ENCODE measurements at regions of chr17 and their contacts with region 1.

Region 1: GRCh38 chr17:409848-410545 is 57.4 kb upstream of the RPH3AL start:
- DNase-seq: peak; percentile 100
- H3K4me3 ChIP-seq: peak overlapping the region; percentile 64 to 98 (median 85)
- H3K27ac ChIP-seq: peak overlapping the region; percentile 70 to 87 (median 76)
- H3K4me1 ChIP-seq: peaks cover 0 to 25% (median 20%) of the 10 kb centered on the region in 4 donors
- H3K27me3 ChIP-seq: no peaks in the 10 kb centered on the region
- CTCF ChIP-seq: no peak
- EP300 ChIP-seq: no peak
- POLR2A ChIP-seq: no peak

Region 2: DNA sequence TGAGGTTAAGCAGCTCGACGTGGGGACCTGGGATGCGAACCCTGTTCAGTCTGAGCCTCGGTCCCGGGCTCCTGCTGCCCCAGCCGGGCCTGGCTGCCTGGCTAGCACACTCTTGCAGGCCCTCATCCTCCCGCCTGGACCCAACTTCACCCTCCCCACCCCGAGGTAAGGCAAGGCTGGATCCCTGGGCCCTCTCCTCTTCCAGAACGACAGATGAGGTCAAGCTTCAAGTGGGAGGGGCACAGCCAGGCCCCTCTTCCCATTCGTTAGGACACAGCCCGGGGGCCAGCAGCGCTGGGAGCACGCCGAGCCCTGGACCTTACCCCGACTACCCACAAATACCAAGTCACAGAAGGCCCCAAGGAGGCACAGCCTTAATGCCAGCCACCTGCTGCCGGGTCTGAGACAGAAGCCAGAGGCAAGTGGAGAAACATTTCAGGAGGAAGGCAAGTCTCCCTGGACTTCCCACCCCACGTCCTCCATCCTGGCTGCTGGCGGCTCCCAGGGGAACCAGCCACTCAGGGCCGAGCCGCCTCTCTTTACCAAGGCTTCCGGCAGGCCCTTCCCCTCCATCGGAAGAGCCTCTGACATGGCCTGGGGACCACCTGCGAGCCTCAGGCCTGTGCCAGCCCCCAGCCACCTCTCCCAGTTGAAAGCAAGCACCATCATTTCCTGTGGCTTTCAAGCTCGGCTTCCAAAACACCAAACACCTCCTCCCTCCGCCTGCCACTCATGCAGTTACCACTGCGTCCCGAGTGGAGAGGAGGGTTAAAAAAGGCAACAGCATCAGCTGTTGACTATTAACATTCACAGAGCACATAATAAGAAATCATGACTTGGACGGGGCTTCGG is 117.2 kb before region 1 on chr17:
- intact Hi-C with region 1: no loop called
- DNase-seq: peak; percentile 38
- H3K4me3 ChIP-seq: no peak overlapping the region
- H3K27ac ChIP-seq: no peak overlapping the region
- H3K4me1 ChIP-seq: peaks cover 0 to 3% (median 0%) of the 10 kb centered on the region in 4 donors
- H3K27me3 ChIP-seq: peaks cover 0 to 5% (median 0%) of the 10 kb centered on the region in 3 donors
- CTCF ChIP-seq: no peak
- EP300 ChIP-seq: no peak
- POLR2A ChIP-seq: no peak

Region 3: GRCh38 chr17:427327-427726 is 17.3 kb after region 1 on chr17:
- intact Hi-C with region 1: no loop called
- DNase-seq: no peak
- H3K4me3 ChIP-seq: no peak overlapping the region
- H3K27ac ChIP-seq: no peak overlapping the region
- H3K4me1 ChIP-seq: no peaks in the 10 kb centered on the region
- H3K27me3 ChIP-seq: no peaks in the 10 kb centered on the region
- CTCF ChIP-seq: no peak
- EP300 ChIP-seq: no peak
- POLR2A ChIP-seq: no peak

Region 4: DNA sequence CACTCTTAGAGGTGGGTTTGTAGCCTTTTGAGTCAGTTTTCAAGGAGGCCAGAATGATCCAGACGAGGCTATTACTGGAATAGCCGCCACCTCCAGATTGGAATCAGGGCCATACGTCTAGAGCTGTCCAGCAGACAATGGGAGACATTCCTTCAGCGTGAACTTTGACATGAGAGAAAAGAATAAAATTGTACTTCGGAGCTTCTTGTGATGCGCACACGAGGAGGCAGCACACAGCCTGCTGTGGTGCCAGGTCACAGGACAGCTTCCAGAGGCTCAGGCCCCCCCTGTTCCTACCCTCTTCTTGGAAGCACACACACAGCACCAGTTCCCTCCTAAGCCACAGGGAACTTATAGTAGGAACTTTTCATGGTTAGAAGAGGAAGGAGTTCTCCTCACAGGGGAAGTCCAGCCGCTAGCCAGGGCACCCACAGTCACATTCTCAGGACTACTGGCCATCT is 223.7 kb after region 1 on chr17:
- intact Hi-C with region 1: loop called (anchors 2 kb)
- DNase-seq: peak; percentile 80
- H3K4me3 ChIP-seq: no peak overlapping the region
- H3K27ac ChIP-seq: peak overlapping the region; percentile 66 to 82 (median 72)
- H3K4me1 ChIP-seq: peaks cover 0 to 30% (median 27%) of the 10 kb centered on the region in 4 donors
- H3K27me3 ChIP-seq: no peaks in the 10 kb centered on the region
- CTCF ChIP-seq: peak in 1 of 4 experiments; percentile 30
- EP300 ChIP-seq: no peak
- POLR2A ChIP-seq: no peak

Region 5: GRCh38 chr17:700504-701094 is 290.6 kb after region 1 on chr17:
- intact Hi-C with region 1: loop called (anchors 1 kb)
- DNase-seq: no peak
- H3K4me3 ChIP-seq: no peak overlapping the region
- H3K27ac ChIP-seq: peak overlapping the region in 1 of 4 donors; percentile 35
- H3K4me1 ChIP-seq: peaks cover 0 to 6% (median 0%) of the 10 kb centered on the region in 4 donors
- H3K27me3 ChIP-seq: no peaks in the 10 kb centered on the region
- CTCF ChIP-seq: peak; percentile 30 to 76 (median 68)
- EP300 ChIP-seq: no peak
- POLR2A ChIP-seq: no peak

Region 6: GRCh38 chr17:979538-980405 is 569.8 kb after region 1 on chr17 and contains the start of gene NXN:
- intact Hi-C with region 1: loop called (anchors 5 kb)
- DNase-seq: peak; percentile 94
- H3K4me3 ChIP-seq: peak within 1 kb of the TSS; percentile 69 to 92 (median 72)
- H3K27ac ChIP-seq: peak within 1 kb of the TSS; percentile 88 to 93 (median 90)
- H3K4me1 ChIP-seq: peaks cover 0 to 47% (median 40%) of the 10 kb centered on the region in 4 donors
- H3K27me3 ChIP-seq: no peaks in the 10 kb centered on the region
- CTCF ChIP-seq: peak in 1 of 4 experiments; percentile 13
- EP300 ChIP-seq: no peak
- POLR2A ChIP-seq: peak; percentile 11 to 50
- total RNA-seq, gene NXN: 50.4 to 75.9 (median 67.1) TPM

Region 7: DNA sequence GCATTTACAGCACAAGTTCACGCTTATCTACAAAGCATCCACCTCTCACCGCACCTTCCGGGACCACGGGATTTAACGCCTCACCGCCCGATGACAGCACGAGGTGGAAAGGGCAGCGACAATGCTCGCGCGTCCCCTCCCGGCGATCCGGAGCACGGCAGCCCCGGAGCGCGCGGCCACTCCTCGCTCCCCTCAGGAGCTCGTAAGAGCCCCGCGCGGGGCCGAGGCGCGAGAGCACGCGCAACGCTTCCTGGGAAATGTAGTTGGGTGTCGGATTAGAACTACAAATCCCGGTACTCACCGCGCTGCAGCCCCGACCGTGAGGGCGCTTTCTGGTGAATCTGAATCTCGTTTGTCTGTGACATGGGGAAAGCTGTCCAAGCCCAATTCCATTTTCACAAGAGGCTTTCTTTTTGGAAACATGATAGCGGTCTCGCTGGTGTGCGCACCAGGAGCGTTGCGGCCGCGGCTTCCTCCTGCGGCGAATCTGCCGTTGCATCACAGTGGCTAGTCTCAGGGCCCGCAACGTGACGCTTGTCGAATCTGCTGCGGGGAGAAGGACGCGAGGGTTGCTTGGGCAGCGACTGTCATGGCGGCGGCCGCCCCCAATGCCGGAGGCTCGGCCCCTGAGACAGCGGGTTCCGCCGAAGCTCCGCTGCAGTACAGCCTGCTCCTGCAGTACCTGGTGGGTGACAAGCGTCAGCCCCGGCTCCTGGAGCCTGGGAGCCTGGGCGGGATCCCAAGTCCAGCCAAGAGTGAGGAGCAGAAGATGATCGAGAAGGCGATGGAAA is 586.8 kb after region 1 on chr17 and contains the start of gene TIMM22:
- intact Hi-C with region 1: loop called (anchors 5 kb)
- DNase-seq: peak; percentile 95
- H3K4me3 ChIP-seq: peak within 1 kb of the TSS; percentile 61 to 99 (median 92)
- H3K27ac ChIP-seq: peak within 1 kb of the TSS; percentile 77 to 92 (median 88)
- H3K4me1 ChIP-seq: peaks cover 0 to 49% (median 41%) of the 10 kb centered on the region in 4 donors
- H3K27me3 ChIP-seq: no peaks in the 10 kb centered on the region
- CTCF ChIP-seq: peak; percentile 90 to 96 (median 94)
- EP300 ChIP-seq: no peak
- POLR2A ChIP-seq: peak; percentile 80 to 85
- total RNA-seq, gene TIMM22: 8.0 to 13.6 (median 11.0) TPM

Measured in sigmoid colon (tissue), 7 donors.